Motor neuron (in vitro differentiated cells): ENCODE measurements at regions of chr4 and their contacts with region 1.

Region 1: DNA sequence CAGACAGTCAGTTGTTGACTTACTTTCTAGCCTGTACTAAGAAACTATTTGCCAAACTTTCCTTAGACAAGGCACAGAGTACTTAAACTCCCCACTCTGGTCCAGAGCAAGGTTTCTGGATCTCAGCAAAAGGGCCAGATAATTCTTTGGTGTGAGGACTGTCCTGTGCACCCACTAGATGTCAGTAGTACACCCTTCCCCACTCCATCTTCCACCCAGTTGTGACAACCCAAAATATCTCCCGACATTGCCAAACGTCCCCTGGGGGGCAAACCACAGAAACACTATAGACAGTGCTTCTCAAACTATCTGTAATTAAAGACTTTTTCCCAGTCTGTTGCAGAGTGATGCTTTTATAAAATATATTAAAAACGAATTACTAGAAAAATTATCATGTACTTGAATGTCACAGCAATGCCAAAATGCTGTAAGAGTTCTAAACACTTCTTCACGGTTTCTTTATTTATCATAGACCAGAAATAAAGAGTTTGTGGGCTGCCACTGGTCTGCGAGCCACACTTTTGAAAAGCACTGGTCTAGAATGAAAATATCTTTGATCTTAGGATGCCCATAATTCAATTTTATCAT is 203.5 kb downstream of the PRDM5 start:
- ATAC-seq: peak in 7 of 8 experiments; percentile 39 to 93 (median 70)
- H3K4me3 ChIP-seq: no peak overlapping the region
- H3K27ac ChIP-seq: no peak overlapping the region
- H3K4me1 ChIP-seq: peaks cover 0 to 6% of the 10 kb centered on the region in 2 donors

Region 2: DNA sequence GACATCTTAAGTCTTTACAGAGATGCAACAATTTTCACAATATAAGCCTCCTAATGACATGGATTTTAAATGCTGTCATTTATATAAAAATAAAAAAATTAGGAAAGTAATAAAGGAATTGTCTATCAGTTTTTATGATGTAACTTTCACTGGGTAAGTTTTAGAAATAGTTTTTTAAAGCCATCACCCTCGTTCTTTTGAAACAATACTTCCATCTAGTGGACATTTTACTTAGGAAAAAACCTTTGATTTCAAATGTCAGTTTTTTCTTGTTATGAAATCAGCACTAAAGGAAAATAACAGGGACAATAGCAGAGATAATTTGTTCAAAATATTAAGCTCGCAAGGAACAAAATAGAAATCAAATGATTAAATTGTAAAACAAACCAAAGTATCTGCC is 377.6 kb after region 1 on chr4:
- in situ Hi-C with region 1: loop called in 2 of 9 experiments (anchors 10 to 25 kb)
- ATAC-seq: peak in 1 of 8 experiments; percentile 14
- H3K4me3 ChIP-seq: no peak overlapping the region
- H3K27ac ChIP-seq: no peak overlapping the region
- H3K4me1 ChIP-seq: no peaks in the 10 kb centered on the region